ENCODE measurements at regions of chr7 and their contacts with region 1.

Region 1: DNA sequence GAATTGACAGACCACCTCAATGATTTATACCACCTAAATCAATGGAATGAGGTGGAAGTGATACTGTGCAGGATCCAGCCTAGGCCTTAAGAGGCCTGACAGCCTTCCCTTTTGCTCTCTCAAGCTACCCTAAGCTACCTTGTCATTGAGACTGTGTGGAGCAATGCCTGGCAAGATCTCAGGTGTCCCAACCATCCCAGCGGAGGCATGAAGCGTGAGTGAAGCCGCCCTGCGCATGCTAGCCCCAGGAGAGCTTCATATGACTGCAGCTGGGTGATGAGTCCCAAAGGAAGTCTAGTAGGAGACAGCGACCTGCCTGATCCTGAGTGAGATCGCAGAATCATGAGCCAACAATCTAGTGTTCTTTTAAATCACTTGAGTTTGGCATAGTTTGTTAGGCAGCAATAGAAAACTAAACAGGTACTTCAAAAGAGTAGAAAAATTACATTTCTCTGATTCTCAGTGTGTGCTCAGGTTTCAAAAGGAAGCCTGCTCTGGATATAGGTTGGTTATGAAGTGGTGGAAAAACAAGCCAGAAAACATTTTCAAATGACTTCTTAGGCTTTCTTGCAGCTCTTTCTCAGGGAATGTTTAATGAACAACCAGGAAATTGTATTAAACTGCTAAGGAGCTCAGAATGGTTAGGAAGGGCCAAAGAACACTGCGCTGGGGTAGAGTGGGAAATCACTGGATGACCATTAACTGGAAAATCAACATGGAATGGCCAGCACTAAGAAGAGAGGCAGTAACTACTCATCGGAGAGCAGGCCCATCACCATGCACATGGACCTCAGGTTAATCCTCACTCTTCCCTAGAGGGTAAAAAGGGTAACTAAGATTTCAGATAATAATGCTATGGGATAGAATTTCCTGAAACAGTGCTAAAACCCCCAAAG is 535.2 kb downstream of the PHTF2 start:
- DNase-seq: no peak
- ATAC-seq: no peak

Region 2: DNA sequence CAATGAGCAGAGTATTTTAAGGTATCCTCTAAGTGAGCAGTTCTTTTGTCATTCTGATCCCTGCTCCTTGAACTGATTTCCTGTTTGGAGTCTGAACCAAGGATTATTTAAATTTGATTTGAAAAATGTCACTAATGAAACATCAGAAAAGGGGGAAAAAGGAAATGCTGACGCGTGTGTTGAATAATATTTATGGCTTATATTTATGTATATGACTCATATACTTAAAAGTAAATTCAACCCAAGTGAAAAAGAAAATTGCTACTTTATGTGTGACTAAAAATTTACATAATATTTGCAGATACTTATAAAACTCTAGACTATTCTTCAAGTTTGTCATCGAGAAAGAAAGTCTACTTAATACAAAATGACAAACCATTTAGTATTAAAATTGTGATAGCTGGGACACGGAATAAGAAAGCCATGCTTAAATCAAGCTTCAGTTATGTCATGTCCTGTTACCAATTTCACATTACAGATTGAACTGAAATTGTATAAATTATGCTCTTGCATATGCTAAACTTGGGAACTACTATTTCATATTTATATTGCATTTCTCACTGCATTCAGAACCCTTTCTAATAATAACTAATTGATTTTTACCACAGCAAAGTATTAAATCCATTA is 469.8 kb after region 1 on chr7:
- intact Hi-C with region 1: loop called (anchors 5 kb)
- DNase-seq: no peak
- ATAC-seq: no peak